Breast epithelium (tissue), 4 donors: ENCODE measurements at regions of chr19 and their contacts with region 1.

Region 1: DNA sequence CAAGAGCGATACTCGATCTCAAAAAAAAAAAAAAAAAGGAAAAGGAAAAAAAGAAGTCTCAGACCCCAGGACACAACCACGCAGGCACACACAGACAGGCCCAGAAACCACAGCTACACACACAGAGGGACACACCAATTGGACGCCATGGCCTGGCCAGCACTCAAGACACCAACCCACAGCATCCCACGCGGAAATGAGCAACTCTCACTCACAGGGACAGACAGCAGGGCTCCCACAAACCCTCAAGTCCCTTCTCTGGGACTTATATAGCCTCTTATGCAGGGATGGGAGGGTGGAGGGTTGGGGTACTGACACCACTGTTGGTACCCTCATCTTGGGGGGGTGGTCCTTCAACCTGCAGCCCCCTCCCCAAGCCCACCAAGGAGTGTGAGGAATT is 5.9 kb downstream of the NOTCH3 start:
- DNase-seq: peak in 1 of 2 donors; percentile 33
- H3K4me3 ChIP-seq: peak overlapping the region in 2 of 3 donors; percentile 60 to 76
- H3K27ac ChIP-seq: peak overlapping the region; percentile 95
- H3K4me1 ChIP-seq: peaks cover 0 to 13% of the 10 kb centered on the region in 2 donors
- H3K27me3 ChIP-seq: no peaks in the 10 kb centered on the region
- CTCF ChIP-seq: no peak
- POLR2A ChIP-seq: no peak

Region 2: GRCh38 chr19:14203177-14203576 is 991.8 kb before region 1 on chr19:
- intact Hi-C with region 1: loop called (anchors 5 kb)
- DNase-seq: no peak
- H3K4me3 ChIP-seq: no peak overlapping the region
- H3K27ac ChIP-seq: no peak overlapping the region
- H3K4me1 ChIP-seq: peaks cover 0 to 10% of the 10 kb centered on the region in 2 donors
- H3K27me3 ChIP-seq: no peaks in the 10 kb centered on the region
- CTCF ChIP-seq: no peak
- POLR2A ChIP-seq: no peak